Common myeloid progenitor, CD34-positive (primary cell): ENCODE measurements at regions of chr5 and their contacts with region 1.

Region 1: DNA sequence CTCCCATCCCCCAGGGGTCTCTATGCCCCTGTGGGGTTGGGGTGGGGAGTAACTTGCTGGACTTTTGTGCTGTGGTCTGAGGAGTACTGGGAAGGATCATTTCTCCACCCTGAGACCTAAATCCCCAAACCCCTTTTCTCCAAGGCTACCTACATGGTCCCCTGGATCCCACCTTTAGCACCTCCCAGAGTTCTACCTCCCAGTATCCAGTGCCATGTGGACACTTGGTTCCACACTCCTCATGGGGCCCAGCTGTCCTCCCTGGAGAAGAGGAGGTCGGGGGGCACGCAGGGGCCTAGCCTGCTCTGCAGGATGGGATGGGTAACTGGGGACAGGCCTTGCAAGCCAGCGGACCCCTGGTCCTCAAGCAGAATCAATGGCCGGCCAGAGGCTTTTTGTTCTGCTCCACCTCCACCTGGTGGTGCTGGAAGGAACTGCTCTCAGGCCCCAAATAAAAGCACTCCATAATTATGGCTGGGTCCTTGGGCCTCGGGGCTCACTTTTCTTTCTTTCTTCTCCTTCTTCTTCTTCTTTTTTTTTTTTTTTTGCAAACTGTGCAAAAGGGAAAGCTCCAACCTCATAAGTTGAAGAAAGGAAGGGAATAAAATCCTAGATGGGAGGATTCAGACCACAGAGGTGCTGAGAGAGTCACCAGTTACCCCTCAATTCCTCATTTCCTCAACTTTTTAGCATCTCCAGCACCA is 68.4 kb downstream of the PSD2 start:
- DNase-seq: peak; percentile 41 to 68 (median 54)
- H3K4me3 ChIP-seq: no peak overlapping the region
- H3K27ac ChIP-seq: no peak overlapping the region
- H3K4me1 ChIP-seq: no peaks in the 10 kb centered on the region
- H3K27me3 ChIP-seq: peaks cover 0 to 19% (median 0%) of the 10 kb centered on the region in 5 experiments

Region 2: DNA sequence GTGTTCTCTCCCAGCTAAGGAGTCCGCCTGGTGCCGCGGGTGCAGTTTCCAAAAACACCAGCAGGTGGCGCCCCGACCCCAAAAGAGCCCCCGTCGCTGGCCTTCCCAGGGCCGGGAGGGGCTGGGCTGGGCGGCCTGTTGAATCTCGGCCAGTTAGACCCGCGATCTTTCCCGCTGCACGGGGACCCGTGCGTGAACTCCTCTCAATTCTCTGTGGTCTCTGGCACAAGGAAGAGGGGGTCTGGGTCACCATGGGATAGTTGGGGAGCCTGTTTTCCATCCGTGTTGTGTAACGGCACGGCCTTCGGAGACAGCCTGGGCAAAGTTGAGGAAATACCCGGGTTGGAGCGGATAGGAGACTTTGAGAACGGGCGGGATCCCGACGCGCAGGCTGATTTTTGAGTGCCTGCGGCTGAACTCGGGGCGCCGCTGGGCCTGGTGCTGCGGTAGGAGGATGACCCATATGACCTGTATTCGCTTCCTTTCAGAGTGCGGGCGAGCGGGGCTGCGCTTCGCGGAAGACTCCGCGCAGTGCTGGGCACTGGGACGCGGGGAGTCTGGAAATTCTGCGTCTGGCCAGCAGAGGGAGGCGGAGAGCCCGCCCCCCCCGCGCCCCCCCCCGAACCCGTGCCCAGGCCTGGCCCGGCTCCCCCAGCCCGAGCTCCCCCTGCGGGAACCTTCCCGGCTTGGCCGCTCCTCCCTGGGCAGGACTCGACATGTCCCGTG is 76.3 kb before region 1 on chr5:
- CTCF ChIA-PET with region 1: interaction called, 43 read pairs
- POLR2A ChIA-PET with region 1: no interaction called
- DNase-seq: peak; percentile 69 to 78 (median 71)
- H3K4me3 ChIP-seq: peak overlapping the region; percentile 49 to 87 (median 73)
- H3K27ac ChIP-seq: no peak overlapping the region
- H3K4me1 ChIP-seq: peaks cover 0 to 9% (median 8%) of the 10 kb centered on the region in 4 experiments
- H3K27me3 ChIP-seq: peaks cover 0 to 18% (median 4%) of the 10 kb centered on the region in 5 experiments

Region 3: DNA sequence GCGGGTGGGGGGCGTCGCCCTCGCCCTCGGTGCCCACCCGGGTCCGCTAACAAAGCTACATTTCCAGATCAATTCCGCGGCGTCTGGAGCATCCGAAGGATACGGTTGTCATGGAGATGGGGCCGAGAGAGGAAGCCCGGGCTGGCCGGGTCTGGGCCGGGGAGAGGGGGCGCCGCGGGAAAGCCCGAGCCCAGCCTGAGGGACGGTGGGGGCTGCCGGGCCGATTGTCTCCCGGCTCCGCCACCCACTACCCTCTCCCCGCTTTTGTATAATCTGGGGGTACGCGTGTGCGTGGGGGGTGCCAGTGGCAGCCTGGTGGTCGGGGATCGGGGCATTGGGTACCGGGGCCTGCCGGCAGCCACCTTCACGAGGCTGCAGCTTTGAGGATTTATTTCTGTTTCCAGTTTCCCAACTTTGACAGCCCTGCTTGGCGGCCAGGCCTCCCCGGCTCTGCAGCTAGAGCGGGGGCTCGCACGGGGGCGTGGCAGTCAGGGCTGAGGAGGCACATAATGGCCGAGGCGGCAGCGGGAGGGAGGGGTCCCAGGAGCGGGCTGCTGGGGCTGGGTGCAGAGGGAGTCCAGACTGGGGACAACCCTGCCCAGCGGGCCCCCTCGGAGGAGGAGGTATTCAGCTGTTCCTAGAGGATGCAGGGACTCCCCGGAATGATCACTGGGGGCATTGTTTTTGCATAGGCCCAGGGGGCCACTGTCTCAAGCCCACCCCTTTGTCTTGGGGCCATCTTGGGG is 67.8 kb before region 1 on chr5:
- CTCF ChIA-PET with region 1: interaction called, 12 read pairs
- POLR2A ChIA-PET with region 1: interaction called, 3 read pairs
- DNase-seq: peak in 1 of 3 donors; percentile 23
- H3K4me3 ChIP-seq: peak overlapping the region in 2 of 7 experiments; percentile 13 to 40
- H3K27ac ChIP-seq: no peak overlapping the region
- H3K4me1 ChIP-seq: peaks cover 0 to 10% (median 3%) of the 10 kb centered on the region in 4 experiments
- H3K27me3 ChIP-seq: peaks cover 7 to 78% (median 36%) of the 10 kb centered on the region in 5 experiments

Region 4: DNA sequence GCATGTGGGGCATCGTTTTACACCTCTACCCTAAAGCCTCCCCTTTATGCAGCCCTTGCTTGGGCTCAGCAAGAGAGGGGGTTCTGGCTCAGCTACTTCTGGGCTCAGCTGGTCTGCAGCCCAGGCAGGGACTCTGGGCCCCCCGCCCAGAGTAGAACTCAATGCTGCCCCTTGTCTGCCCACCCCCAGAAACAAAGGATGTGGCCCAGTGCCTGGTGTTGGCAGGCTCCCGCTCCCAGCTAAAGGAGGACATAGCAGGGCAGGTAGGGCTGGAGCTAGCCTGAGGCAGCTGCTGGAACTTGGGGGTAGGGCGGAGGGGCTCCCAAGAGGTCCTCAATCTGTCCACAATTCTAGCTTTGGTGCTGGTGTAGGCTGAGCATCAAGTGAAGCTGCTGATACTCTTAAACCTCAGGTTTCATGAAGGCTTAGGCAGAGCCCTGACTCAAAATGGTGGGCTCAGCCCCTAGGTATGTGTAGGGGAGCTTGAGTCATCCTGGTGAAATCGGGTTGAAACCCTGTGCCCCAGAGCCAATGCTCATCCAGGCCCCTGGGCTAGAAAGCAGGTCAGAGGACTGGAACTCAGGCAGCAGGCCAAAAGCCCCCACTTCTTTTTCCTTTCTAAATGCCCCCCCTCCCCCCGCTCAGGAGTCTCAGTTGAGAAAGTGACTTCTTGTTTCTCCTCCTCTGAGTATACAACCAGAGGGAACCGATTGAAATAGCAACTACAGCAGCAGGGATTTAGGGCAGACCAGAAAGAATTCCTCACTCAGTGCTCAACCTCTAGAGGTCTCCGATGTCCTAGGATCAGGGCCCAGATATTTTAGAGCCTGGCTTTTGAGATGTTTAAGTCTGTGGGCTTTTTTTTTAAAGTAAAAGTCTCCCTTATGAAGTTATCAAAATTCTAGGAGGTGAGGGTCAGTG is 57.0 kb before region 1 on chr5:
- CTCF ChIA-PET with region 1: interaction called, 13 read pairs
- POLR2A ChIA-PET with region 1: no interaction called
- DNase-seq: no peak
- H3K4me3 ChIP-seq: no peak overlapping the region
- H3K27ac ChIP-seq: no peak overlapping the region
- H3K4me1 ChIP-seq: no peaks in the 10 kb centered on the region
- H3K27me3 ChIP-seq: peaks cover 0 to 25% (median 6%) of the 10 kb centered on the region in 5 experiments

Region 5: GRCh38 chr5:139844472-139845145 is 19.4 kb before region 1 on chr5:
- CTCF ChIA-PET with region 1: interaction called, 15 read pairs
- POLR2A ChIA-PET with region 1: no interaction called
- DNase-seq: peak; percentile 86 to 90 (median 89)
- H3K4me3 ChIP-seq: no peak overlapping the region
- H3K27ac ChIP-seq: no peak overlapping the region
- H3K4me1 ChIP-seq: peaks cover 0 to 16% (median 9%) of the 10 kb centered on the region in 4 experiments
- H3K27me3 ChIP-seq: peaks cover 0 to 35% (median 21%) of the 10 kb centered on the region in 5 experiments

Region 6: DNA sequence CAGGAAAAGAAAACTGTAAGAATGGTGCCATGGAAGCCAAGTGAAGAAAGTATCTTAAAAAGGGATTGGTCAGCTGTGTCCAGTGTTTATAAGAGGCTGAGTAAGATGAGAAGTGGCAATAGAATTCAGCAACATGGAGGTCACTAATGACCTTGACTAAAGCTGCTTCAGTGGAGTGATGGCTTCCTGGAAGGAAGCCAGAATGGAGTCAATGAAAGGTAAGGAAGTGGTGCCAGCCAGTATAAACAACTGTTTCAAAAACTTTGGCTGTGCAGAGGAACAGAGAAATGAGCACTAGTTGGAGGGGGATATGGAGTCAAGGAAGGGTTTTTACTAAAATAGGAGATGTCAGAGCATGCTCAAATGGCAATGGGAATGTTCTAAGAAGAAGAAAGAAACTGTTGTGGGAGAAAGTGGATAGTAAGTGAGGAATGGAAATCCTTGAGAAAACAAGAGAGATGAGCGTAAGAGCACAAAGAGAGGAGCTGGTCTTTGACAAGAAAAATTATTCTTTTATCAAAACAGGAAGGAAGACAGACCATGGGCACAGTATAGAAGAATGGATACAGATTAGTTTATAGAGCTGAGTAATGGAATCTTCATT is 190.2 kb after region 1 on chr5:
- CTCF ChIA-PET with region 1: no interaction called
- POLR2A ChIA-PET with region 1: no interaction called
- DNase-seq: no peak
- H3K4me3 ChIP-seq: no peak overlapping the region
- H3K27ac ChIP-seq: no peak overlapping the region
- H3K4me1 ChIP-seq: no peaks in the 10 kb centered on the region
- H3K27me3 ChIP-seq: peaks cover 6 to 33% (median 21%) of the 10 kb centered on the region in 5 experiments